Pancreas (tissue), 10 donors: ENCODE measurements at regions of chr3 and their contacts with region 1.

Region 1: DNA sequence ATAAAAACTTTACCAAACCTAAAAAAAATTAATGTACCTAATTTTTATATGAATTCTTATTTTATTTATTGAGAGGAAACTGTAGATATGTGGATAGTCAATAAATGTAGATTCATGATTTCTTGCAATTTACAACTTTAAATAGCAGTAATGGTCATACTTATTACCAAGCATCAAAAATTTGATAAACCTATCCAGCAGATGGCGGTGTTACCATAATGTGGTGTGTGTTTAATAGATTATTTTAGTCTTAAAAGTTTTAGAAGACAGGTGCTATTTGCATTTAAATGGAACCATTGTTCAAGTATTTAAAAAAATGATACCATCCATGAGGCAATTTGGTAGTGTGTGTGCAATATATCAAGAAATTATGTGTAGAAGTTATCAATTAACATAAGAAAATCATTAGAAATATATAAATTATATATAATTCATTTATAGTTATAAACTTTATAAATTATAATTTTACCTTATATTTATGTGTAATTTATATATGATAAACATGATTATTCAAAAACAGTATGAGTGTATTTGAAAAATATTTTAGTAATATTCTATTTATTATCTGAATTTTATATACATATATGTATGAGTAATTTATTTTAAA is 176.0 kb upstream of the BCHE start:
- DNase-seq: no peak
- ATAC-seq: peak in 1 of 4 donors; percentile 43
- H3K4me3 ChIP-seq: no peak overlapping the region
- H3K27ac ChIP-seq: no peak overlapping the region
- H3K4me1 ChIP-seq: no peaks in the 10 kb centered on the region
- H3K27me3 ChIP-seq: no peaks in the 10 kb centered on the region
- CTCF ChIP-seq: peak in 2 of 4 donors; percentile 20 to 52

Region 2: GRCh38 chr3:167032261-167032876 is 1019.2 kb after region 1 on chr3:
- intact Hi-C with region 1: loop called in 2 of 3 experiments (anchors 10 kb)
- DNase-seq: peak in 3 of 6 donors; percentile 6 to 23 (median 22)
- ATAC-seq: peak in 3 of 4 donors; percentile 76 to 84 (median 83)
- H3K4me3 ChIP-seq: no peak overlapping the region
- H3K27ac ChIP-seq: no peak overlapping the region
- H3K4me1 ChIP-seq: peaks cover 0 to 9% (median 0%) of the 10 kb centered on the region in 3 donors
- H3K27me3 ChIP-seq: peaks cover 0 to 9% (median 0%) of the 10 kb centered on the region in 4 donors
- CTCF ChIP-seq: peak in 2 of 4 donors; percentile 26 to 32